Dorsolateral prefrontal cortex (tissue), 120 donors: ENCODE measurements at regions of chr15 and their contacts with region 1.

Region 1: GRCh38 chr15:44971036-44971435 is 14.5 kb downstream of the TERB2 start:
- DNase-seq: no peak
- H3K4me3 ChIP-seq: no peak overlapping the region
- H3K27ac ChIP-seq: no peak overlapping the region
- H3K27me3 ChIP-seq: no peaks in the 10 kb centered on the region
- CTCF ChIP-seq: no peak

Region 2: GRCh38 chr15:45037936-45038335 is 66.9 kb after region 1 on chr15:
- intact Hi-C with region 1: loop called (anchors 2 to 5 kb)
- DNase-seq: no peak
- H3K4me3 ChIP-seq: no peak overlapping the region
- H3K27ac ChIP-seq: no peak overlapping the region
- H3K27me3 ChIP-seq: no peaks in the 10 kb centered on the region
- CTCF ChIP-seq: no peak

Region 3: GRCh38 chr15:45064386-45064785 is 93.3 kb after region 1 on chr15:
- intact Hi-C with region 1: no loop called
- DNase-seq: no peak
- H3K4me3 ChIP-seq: no peak overlapping the region
- H3K27ac ChIP-seq: no peak overlapping the region
- H3K27me3 ChIP-seq: no peaks in the 10 kb centered on the region
- CTCF ChIP-seq: no peak